Tibial artery (tissue), 4 donors: ENCODE measurements at regions of chr12 and their contacts with region 1.

Region 1: DNA sequence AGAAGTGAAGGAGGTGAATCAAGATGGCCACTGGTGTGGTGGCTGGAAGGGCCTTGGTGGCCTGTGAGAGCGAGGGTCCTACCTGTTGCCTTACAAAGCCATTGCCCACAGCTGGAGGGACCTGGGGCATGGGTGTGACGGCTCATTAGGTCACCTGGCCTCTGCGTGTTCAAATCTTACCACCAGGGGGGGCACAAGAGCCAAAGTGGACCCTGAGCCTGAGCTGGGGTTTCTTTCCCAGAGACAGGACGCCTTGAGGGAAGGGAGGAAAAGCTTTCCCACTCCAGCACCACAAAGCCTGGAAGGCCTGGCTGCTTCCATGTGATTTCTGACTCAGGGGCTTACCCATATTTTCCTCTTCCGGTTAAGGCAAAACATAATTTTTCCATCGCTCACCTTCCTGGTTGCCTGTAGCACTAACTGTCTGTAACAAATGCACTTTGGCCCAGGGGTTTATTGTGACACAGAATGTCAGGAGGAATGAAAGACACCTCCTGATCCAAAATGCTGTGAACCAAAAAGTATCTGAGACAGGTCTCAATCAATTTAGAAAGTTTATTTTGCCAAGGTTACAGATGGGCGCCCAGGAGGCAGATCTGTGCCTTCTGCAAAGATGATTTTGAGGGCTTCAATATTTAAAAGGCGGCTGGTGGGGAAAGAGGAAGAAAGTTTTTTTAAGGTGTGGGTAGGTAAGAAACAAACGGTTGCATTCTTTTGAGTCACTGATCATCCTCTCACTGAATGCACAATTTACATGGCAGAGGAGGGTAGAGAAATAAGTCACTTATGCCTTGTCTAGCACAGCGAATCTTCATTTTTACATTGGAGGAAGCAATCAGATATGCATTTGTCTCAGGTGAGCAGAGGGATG is 4.3 kb upstream of the CD9 start:
- DNase-seq: peak; percentile 88 to 93
- H3K4me3 ChIP-seq: no peak overlapping the region
- H3K27ac ChIP-seq: peak overlapping the region; percentile 48 to 50
- H3K4me1 ChIP-seq: peaks cover 0 to 23% (median 7%) of the 10 kb centered on the region in 4 donors
- H3K27me3 ChIP-seq: no peaks in the 10 kb centered on the region
- CTCF ChIP-seq: peak; percentile 93 to 98

Region 2: DNA sequence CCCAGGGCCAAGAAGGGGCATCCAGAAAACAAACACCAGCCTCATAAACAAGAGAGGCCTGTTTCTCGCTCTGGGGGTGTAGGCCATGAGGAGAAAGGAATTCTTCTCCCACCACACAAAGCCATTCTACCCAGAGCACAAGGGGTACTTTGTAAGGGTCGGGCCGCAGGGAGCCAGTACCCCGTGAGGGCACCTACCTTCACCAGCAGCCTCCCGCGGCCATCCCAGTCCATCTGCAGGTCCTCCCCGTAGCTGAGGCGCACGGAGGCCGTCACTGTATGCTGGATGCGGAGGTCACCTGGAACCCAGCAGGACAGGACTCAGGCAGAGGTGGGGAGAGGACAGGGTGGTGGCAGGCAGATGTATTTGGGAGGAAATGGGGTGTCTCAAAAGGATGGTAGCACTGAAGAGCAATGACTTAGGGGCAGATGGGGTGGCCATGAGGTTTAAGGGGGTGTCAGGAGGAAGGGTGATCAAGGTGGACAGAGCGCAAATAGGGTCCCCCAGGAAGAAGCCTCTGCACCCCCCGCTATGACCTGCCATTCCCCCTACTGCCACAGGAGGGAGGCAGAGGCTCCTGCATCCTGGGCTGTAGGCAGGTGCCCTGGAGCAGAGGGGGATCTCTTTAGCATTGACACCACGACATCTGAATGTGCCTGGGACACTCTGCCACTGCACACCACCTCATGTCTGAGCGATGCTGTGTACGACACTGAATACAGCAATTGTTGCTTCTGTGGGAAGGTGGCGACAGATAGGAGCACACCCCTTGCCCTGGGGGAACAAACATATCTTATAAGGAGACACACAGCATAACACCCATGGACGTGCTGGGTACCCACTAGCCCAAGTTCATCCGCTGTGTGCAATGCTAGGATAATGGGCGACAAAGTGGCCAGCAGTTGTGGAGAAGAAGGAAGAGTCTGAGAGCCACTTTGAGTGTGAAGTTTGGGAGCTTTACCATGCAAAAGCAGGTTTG is 132.9 kb before region 1 on chr12:
- intact Hi-C with region 1: loop called (anchors 5 kb)
- DNase-seq: no peak
- H3K4me3 ChIP-seq: no peak overlapping the region
- H3K27ac ChIP-seq: no peak overlapping the region
- H3K4me1 ChIP-seq: no peaks in the 10 kb centered on the region
- H3K27me3 ChIP-seq: no peaks in the 10 kb centered on the region
- CTCF ChIP-seq: peak; percentile 87 to 90

Region 3: GRCh38 chr12:6230321-6231110 is 34.6 kb after region 1 on chr12:
- intact Hi-C with region 1: loop called (anchors 5 kb)
- DNase-seq: peak; percentile 69 to 83
- H3K4me3 ChIP-seq: peak overlapping the region in 1 of 2 donors; percentile 26
- H3K27ac ChIP-seq: peak overlapping the region; percentile 85 to 92
- H3K4me1 ChIP-seq: peaks cover 6 to 86% (median 78%) of the 10 kb centered on the region in 4 donors
- H3K27me3 ChIP-seq: no peaks in the 10 kb centered on the region
- CTCF ChIP-seq: no peak

Region 4: GRCh38 chr12:6278439-6279255 is 82.7 kb after region 1 on chr12:
- intact Hi-C with region 1: loop called (anchors 2 kb)
- DNase-seq: peak; percentile 78 to 95
- H3K4me3 ChIP-seq: peak overlapping the region; percentile 49 to 60
- H3K27ac ChIP-seq: peak overlapping the region; percentile 77 to 82
- H3K4me1 ChIP-seq: peaks cover 0 to 33% (median 27%) of the 10 kb centered on the region in 4 donors
- H3K27me3 ChIP-seq: no peaks in the 10 kb centered on the region
- CTCF ChIP-seq: peak; percentile 84 to 100